ENCODE measurements at regions of chr18 and their contacts with region 1.

Region 1: DNA sequence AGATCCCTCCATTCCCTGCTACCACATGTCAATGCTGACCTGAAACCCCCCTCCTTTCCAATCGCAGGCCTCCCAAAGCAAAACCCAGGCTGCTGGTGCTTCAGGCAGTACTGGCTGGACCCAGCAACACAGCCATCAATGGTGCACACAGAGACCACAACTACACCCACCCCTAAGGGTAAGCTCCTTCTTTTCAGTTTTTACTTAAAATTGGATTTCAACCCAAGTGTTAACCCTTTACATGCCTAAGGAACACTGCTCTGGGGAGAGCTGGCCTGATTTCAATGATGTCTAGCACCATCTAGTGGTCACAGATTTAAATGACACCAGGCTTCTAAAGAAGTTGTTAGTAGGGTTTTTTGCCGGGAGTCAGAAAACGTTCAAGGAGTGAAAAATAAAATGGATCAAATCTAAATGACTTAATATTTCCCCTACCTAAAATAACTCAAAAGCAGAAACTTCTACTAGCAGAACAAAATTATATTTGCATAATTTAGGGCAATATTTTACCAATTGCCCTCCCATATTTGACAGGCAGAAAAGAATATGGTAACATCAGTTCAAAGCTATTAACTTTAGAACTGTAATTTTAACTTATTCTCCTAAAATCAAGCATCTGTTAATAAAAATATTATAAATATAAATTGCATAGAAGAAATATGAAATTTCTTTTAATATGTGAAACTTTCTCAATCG is 24.6 kb downstream of the FECH start:
- H3K4me3 Mint-ChIP-seq: no peak overlapping the region
- H3K27ac Mint-ChIP-seq: no peak overlapping the region
- H3K4me1 Mint-ChIP-seq: no peaks in the 10 kb centered on the region
- H3K27me3 Mint-ChIP-seq: no peaks in the 10 kb centered on the region

Region 2: GRCh38 chr18:56748698-56749268 is 813.1 kb before region 1 on chr18:
- intact Hi-C with region 1: loop called (anchors 5 kb)
- H3K4me3 Mint-ChIP-seq: no peak overlapping the region
- H3K27ac Mint-ChIP-seq: no peak overlapping the region
- H3K4me1 Mint-ChIP-seq: peaks cover 4% of the 10 kb centered on the region
- H3K27me3 Mint-ChIP-seq: no peaks in the 10 kb centered on the region

Region 3: GRCh38 chr18:56869189-56869777 is 692.6 kb before region 1 on chr18:
- intact Hi-C with region 1: loop called (anchors 2 kb)
- H3K4me3 Mint-ChIP-seq: no peak overlapping the region
- H3K27ac Mint-ChIP-seq: no peak overlapping the region
- H3K4me1 Mint-ChIP-seq: peaks cover 5% of the 10 kb centered on the region
- H3K27me3 Mint-ChIP-seq: no peaks in the 10 kb centered on the region

Measured in dendritic cell treated with granulocyte-macrophage colony-stimulating factor and Interleukin-4, amounts not matched to agents 40 ng/mL and 50 ng/mL, for 4 days (primary cell).